ENCODE measurements at regions of chr2 and their contacts with region 1.

Region 1: DNA sequence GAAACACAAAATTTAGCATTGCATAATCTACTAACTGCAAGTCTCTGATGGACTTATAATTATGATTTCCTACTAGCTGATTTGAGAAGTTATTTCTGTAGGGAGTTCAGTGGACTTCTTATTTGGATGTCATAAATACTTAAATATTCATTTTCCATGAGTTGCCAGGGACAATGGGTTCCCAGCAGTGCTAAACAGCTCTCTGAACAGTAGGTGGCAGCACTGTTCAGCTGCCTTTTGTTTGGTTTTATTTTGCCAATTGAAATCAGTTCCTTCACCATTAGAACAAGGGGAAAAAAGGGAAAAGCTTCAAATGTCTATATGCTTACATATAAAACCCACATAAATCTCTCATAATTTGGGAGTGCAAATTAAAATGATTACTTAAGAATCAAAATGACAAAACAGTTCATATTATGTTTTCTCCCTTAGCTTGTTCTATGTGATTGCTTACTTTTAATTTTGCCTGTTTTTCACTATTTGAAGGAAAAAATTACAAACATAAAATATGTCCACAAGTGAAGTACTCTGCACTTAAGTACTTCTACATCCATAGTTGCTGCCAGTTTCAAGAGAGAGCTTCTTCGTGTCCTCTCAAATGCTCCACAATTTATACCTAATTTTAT is 898.9 kb downstream of the CPS1 start:
- DNase-seq: peak; percentile 78
- ATAC-seq: peak; percentile 79
- H3K4me3 ChIP-seq: no peak overlapping the region
- H3K27ac ChIP-seq: no peak overlapping the region
- H3K4me1 ChIP-seq: no peaks in the 10 kb centered on the region
- H3K27me3 ChIP-seq: no peaks in the 10 kb centered on the region
- CTCF ChIP-seq: peak; percentile 95

Region 2: GRCh38 chr2:210252699-210253606 is 1202.4 kb before region 1 on chr2:
- CTCF ChIA-PET with region 1: no interaction called
- POLR2A ChIA-PET with region 1: no interaction called
- intact Hi-C with region 1: no loop called
- DNase-seq: no peak
- ATAC-seq: no peak
- H3K4me3 ChIP-seq: no peak overlapping the region
- H3K27ac ChIP-seq: no peak overlapping the region
- H3K4me1 ChIP-seq: no peaks in the 10 kb centered on the region
- H3K27me3 ChIP-seq: peaks cover 18% of the 10 kb centered on the region
- CTCF ChIP-seq: no peak

Region 3: DNA sequence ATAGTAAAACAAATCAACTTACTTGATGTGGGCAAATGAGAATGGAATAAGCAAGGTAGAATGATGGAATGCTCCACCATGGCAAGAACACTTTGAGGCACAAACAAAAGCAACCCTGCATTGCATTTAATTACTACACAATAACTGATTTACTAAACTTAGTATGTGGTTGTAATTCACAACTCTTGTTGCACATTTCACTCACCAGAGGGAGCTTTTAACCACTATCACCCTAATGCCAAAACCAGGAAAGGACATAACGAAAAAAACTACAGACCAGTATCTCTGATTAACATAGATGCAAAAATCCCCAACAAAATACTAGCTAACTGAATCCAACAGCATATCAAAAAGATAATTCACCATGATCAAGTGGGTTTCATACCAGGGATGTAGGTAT is 239.1 kb before region 1 on chr2:
- CTCF ChIA-PET with region 1: interaction called, 5 read pairs
- POLR2A ChIA-PET with region 1: no interaction called
- intact Hi-C with region 1: loop called (anchors 1 kb)
- DNase-seq: peak; percentile 54
- ATAC-seq: 0 out of 2 replicates have a peak, but pooled peaks have one; percentile 37
- H3K4me3 ChIP-seq: no peak overlapping the region
- H3K27ac ChIP-seq: no peak overlapping the region
- H3K4me1 ChIP-seq: no peaks in the 10 kb centered on the region
- H3K27me3 ChIP-seq: no peaks in the 10 kb centered on the region
- CTCF ChIP-seq: peak; percentile 68

Region 4: DNA sequence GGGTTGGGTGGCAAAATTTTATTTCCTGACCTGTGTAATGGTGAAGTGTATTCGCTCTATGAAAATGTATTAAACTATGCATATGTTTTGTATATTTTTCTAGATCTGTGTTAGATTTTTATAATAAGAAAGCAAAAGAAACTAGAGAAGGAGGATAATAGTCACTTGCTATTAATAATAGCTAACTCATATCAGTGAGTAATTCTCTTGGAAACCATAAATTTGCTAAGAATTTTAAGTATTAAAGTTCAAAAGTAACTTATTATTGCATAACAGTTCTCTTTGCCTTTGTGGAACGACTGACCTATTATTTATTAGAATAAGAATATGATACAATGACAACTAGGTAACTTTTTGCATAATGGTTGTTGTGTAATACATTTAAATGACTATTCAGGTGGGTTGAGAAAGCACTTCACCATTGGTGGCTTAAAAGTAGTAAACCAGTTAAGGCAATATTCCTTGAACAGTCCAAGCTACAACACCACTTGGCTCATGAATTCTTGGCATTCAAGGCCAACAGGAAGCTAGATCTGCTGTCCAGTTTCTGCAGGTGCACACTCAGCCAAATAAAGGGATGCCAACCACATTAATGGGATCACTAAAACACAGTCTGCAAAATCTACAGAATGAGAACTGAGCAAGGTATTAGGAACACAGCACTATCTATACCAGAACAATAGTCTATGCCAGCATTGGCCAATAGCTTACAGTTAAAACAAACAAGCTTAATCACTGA is 22.4 kb after region 1 on chr2:
- CTCF ChIA-PET with region 1: no interaction called
- POLR2A ChIA-PET with region 1: no interaction called
- intact Hi-C with region 1: no loop called
- DNase-seq: no peak
- ATAC-seq: no peak
- H3K4me3 ChIP-seq: no peak overlapping the region
- H3K27ac ChIP-seq: no peak overlapping the region
- H3K4me1 ChIP-seq: no peaks in the 10 kb centered on the region
- H3K27me3 ChIP-seq: 0 out of 2 replicates have a peak, but pooled peaks cover 4% of the 10 kb centered on the region
- CTCF ChIP-seq: no peak

Region 5: DNA sequence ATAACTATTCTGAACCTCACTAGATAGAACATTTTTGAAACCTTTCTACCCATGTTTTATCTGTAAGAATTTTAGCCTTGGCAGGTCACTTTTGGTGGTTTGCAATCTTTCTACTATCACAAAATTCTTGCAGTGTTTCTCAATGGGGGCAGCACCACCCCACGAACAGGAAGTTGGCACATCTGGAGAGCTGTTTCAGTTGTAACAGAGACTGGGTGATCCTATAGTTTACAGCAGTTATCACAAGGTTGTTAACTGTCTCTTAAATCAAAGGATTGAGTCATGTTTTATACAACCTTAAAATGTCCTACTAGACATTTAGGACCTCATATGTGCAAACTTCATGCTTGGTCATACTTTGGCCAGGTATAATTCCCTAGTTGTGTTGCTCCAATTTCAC is 254.1 kb after region 1 on chr2:
- CTCF ChIA-PET with region 1: no interaction called
- POLR2A ChIA-PET with region 1: no interaction called
- intact Hi-C with region 1: loop called (anchors 10 kb)
- DNase-seq: no peak
- ATAC-seq: no peak
- H3K4me3 ChIP-seq: no peak overlapping the region
- H3K27ac ChIP-seq: no peak overlapping the region
- H3K4me1 ChIP-seq: no peaks in the 10 kb centered on the region
- H3K27me3 ChIP-seq: no peaks in the 10 kb centered on the region
- CTCF ChIP-seq: no peak